ENCODE measurements at regions of chr16 and their contacts with region 1.

Region 1: DNA sequence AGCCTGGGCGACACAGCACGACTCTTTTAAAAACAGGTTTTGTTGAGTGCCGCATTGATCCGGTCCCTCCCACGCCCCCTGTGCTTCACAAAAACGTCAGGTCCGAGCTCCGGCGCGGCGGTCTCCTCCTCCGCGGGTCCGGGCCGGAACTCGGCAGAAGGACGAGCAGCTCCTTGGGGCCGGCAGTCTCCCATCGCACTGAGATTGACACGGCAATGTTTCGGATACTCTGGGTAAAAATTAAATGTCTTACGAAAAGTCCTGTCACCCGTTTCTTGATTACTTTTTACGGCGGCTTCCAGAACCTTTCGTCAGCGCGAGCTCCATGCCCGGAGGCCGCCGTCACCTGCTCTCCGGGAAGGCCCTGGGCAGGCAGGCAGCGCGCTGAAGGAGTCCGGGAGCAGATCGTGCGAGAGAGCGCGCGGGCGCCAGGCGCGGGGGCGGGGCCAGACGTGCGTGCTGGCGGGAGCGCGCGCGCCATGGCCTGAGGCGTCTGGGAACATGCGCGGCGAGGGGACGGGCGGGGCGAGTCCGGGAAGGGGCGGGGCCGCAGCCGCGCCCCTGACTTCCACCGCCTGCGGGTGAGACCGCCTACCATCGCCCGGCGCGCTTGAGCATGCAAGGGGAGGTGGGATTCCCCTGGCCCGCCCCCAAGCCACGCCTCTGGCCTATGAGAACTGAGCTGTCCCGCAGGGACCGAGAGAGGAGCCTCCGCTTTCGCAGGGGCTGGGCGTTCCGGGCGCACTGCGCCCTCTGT is 11.7 kb upstream of the SRL start:
- DNase-seq: peak; percentile 100
- H3K4me3 Mint-ChIP-seq: peak overlapping the region; percentile 96
- H3K27ac Mint-ChIP-seq: peak overlapping the region; percentile 97
- H3K4me1 Mint-ChIP-seq: peaks cover 11% of the 10 kb centered on the region
- H3K27me3 Mint-ChIP-seq: no peaks in the 10 kb centered on the region

Region 2: DNA sequence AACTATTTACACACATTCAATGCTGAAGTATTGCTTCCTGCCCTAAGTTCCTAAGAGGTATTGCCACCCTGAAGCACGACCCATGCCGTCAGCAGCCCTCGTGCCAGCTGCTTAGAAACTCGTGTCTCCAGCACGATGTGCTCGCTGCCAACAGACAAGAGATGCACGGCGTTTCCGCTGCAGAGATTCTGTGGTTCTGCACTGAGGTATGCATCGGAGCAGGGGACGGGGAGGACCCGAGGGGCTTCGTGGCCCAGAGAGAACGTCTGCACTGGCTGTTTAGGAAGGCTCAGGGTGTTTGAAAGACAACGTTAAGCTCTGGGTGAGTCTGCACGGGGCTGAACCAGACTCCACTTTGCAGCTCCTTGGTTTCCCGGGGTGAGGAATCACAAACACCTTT is 290.4 kb before region 1 on chr16:
- CTCF ChIA-PET with region 1: interaction called, 11 read pairs
- POLR2A ChIA-PET with region 1: no interaction called
- DNase-seq: peak; percentile 23
- H3K4me3 Mint-ChIP-seq: no peak overlapping the region
- H3K27ac Mint-ChIP-seq: no peak overlapping the region
- H3K4me1 Mint-ChIP-seq: peaks cover 22% of the 10 kb centered on the region
- H3K27me3 Mint-ChIP-seq: peaks cover 2% of the 10 kb centered on the region

Region 3: DNA sequence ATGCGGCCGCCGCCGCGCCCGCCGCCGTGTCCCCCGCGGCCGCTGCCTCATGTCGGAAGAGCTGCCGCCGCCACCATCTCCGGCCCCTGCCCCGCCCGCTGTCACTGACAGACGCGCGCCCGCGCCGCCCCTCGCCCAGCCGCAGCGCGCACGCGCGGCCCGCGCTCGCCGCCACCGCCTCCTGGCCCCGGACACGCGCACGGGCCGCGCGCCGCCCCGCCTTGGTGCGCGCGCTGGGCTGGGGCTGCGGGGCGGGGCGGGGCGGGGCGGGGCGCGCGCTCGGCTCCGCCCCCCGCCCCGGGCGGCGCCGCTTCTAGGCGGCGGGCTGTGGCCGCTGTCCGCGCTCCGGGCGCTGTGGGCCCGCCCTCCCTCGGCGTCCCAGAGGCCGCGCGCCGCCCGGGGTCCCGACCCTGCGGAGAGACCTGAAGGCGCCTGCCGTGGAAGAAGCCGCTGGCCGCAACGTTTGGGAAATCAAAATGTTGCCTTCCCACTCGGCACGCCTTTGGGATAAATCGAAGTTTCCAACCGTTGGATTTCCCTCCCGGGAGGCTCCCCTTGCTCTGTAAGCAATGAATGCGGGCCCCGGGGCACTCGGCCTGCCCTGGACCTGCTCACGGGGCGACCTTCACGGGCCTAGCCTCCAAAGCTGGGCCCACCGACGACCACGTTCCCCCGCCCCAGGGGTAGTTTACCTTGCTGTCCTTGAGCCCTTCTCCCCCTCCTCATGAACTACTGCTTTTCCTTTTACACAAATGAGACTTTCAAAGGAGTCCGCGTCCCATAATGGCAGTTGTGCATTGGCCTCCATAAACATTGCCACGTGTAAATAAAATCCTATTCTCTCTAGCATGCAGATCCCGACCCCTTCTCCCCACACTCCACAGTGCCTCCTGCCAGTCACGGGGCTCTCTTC is 137.0 kb before region 1 on chr16 and contains the start of gene ADCY9:
- CTCF ChIA-PET with region 1: interaction called, 16 read pairs
- POLR2A ChIA-PET with region 1: interaction called, 10 read pairs
- DNase-seq: peak; percentile 81
- H3K4me3 Mint-ChIP-seq: peak within 1 kb of the TSS; percentile 72
- H3K27ac Mint-ChIP-seq: peak within 1 kb of the TSS; percentile 53
- H3K4me1 Mint-ChIP-seq: peaks cover 41% of the 10 kb centered on the region
- H3K27me3 Mint-ChIP-seq: peaks cover 12% of the 10 kb centered on the region
- total RNA-seq, gene ADCY9: 9.0 to 9.5 TPM

Region 4: GRCh38 chr16:4239020-4239419 is 14.6 kb before region 1 on chr16:
- CTCF ChIA-PET with region 1: interaction called, 12 read pairs
- POLR2A ChIA-PET with region 1: interaction called, 6 read pairs
- DNase-seq: no peak
- H3K4me3 Mint-ChIP-seq: no peak overlapping the region
- H3K27ac Mint-ChIP-seq: no peak overlapping the region
- H3K4me1 Mint-ChIP-seq: no peaks in the 10 kb centered on the region
- H3K27me3 Mint-ChIP-seq: peaks cover 21% of the 10 kb centered on the region

Region 5: DNA sequence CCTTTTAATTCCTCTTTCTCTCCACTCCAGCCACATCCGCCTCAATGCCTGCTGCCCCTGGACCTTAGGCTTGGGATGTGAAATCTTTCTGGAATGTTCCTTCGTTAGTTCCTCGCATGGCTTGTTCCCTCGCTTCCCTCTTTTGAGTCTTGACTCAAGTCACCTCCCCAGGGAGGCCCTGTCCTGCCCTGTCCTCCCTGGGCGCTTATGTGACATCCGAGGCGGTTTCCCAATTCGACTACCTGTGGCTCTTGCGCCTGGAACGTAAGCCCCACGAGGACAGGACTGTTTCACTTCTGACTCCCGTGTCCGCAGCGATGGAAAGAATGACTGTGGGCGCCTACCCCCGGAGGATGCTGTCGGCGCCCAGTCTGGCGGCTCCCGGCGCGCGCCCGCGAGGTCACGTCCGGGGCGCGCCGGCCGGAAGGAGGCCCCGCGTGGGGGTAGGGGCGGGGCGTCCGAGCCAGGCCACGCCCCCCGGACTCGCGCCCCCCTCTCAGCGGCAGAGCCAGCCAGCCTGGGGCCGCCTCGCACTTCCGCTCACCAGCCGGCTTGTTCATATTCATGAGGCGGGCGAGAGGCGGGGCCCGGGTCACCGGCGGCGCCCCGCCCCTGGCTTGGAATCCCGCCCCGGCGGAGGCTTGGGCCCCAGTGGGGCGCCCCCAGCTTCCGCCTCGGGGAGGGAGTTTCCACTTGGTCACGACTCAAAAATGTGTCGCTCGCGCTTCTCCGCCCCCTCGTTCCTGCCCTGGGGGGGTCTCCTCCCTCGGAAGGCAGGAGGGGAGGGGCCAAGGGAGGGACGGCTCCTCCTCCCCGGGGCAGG is 53.9 kb after region 1 on chr16:
- CTCF ChIA-PET with region 1: interaction called, 22 read pairs
- POLR2A ChIA-PET with region 1: interaction called, 4 read pairs
- DNase-seq: peak; percentile 97
- H3K4me3 Mint-ChIP-seq: peak overlapping the region; percentile 93
- H3K27ac Mint-ChIP-seq: peak overlapping the region; percentile 92
- H3K4me1 Mint-ChIP-seq: peaks cover 30% of the 10 kb centered on the region
- H3K27me3 Mint-ChIP-seq: no peaks in the 10 kb centered on the region

Region 6: DNA sequence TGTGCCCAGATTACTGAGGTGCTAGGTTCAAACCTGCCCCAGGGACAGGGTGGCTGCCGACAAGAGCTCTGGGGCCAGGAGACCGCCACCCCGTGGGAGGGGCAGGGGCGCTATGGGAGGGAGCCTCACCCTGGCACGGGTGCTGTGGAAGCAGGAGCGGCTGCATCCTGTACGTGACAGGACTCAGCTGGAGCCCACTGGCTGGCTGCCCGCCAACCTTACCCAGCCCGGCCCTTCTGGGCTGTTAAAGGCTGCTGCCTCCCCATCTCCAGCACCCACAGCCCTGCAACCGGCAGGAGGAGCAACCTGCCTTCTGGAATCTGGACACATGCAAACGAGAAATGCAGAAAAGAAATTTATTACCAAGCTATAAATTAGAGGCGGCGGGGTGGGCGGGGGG is 86.3 kb after region 1 on chr16:
- CTCF ChIA-PET with region 1: no interaction called
- POLR2A ChIA-PET with region 1: no interaction called
- DNase-seq: no peak
- H3K4me3 Mint-ChIP-seq: no peak overlapping the region
- H3K27ac Mint-ChIP-seq: no peak overlapping the region
- H3K4me1 Mint-ChIP-seq: no peaks in the 10 kb centered on the region
- H3K27me3 Mint-ChIP-seq: no peaks in the 10 kb centered on the region

Region 7: GRCh38 chr16:4529085-4530060 is 275.8 kb after region 1 on chr16:
- CTCF ChIA-PET with region 1: no interaction called
- POLR2A ChIA-PET with region 1: no interaction called
- DNase-seq: no peak
- H3K4me3 Mint-ChIP-seq: no peak overlapping the region
- H3K27ac Mint-ChIP-seq: peak overlapping the region; percentile 45
- H3K4me1 Mint-ChIP-seq: peaks cover 27% of the 10 kb centered on the region
- H3K27me3 Mint-ChIP-seq: no peaks in the 10 kb centered on the region

Measured in activated CD4-positive, alpha-beta memory T cell treated with anti-CD3 and anti-CD28 coated beads, Interleukin-2, amount 10 ng/mL, durations not matched to agents 7 days and 5 days (primary cell).